Activated naive CD4-positive, alpha-beta T cell treated with anti-CD3 and anti-CD28 coated beads for 36 hours (primary cell): ENCODE measurements at regions of chr9 and their contacts with region 1.

Region 1: DNA sequence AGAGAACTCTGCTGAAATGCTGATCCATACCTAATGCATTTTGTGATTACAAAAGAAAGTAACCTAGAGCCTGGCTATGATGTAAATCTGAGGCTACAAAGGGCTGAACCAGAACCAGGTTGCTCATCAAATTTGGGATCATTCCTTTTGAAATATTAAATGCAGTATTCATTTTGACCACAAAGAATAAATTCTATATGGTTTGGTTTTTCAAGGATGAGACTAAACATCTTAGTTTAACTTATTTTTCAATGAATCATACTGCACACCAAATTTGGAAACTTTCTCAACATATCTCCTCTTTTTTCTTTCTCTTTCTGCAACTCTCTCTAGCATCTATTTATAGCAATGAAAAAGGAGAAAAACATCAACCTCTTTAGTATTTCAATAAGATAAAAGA is 46.5 kb downstream of the CEMIP2 start:
- DNase-seq: no peak
- H3K4me3 Mint-ChIP-seq: no peak overlapping the region
- H3K27ac Mint-ChIP-seq: no peak overlapping the region
- H3K4me1 Mint-ChIP-seq: peaks cover 6% of the 10 kb centered on the region
- H3K27me3 Mint-ChIP-seq: no peaks in the 10 kb centered on the region

Region 2: GRCh38 chr9:71752928-71753327 is 31.1 kb after region 1 on chr9:
- CTCF ChIA-PET with region 1: no interaction called
- intact Hi-C with region 1: loop called (anchors 2 kb)
- DNase-seq: no peak
- H3K4me3 Mint-ChIP-seq: no peak overlapping the region
- H3K27ac Mint-ChIP-seq: no peak overlapping the region
- H3K4me1 Mint-ChIP-seq: peaks cover 56% of the 10 kb centered on the region
- H3K27me3 Mint-ChIP-seq: no peaks in the 10 kb centered on the region